AG04449 (cell line): ENCODE measurements at regions of chr20 and their contacts with region 1.

Region 1: DNA sequence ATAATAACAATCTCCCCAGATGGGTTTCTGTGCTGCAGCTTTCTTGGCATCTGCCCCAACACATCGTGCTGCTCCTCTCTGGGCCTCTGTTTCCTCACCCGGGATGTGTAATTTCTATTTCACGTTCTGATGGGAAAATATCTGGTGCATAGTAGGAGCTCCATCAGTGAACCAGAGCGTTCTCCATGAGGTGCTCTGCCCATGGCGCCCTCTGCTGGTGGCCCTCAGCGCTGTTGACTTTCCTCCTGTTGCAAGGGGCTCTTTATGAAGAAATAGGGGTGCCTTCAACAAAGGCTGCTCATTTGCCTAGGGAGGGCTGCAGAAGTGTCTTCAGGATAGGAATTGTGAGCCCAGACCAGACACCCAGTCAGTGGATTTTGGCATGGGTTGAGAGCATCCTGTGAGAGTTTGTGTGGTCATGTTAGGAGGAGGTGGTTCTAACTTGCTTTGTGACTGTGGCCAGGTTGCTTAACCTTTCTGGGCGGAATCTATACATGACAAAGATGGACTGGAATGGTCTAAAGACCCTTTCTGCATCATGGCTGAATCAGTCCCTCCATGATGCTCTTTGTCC is 8.1 kb downstream of the SCRT2 start:
- DNase-seq: no peak
- H3K4me3 ChIP-seq: no peak overlapping the region
- CTCF ChIP-seq: peak; percentile 87

Region 2: GRCh38 chr20:537139-537538 is 130.3 kb before region 1 on chr20:
- CTCF ChIA-PET with region 1: no interaction called
- POLR2A ChIA-PET with region 1: no interaction called
- DNase-seq: no peak
- H3K4me3 ChIP-seq: no peak overlapping the region
- CTCF ChIP-seq: no peak

Region 3: GRCh38 chr20:555933-556526 is 111.4 kb before region 1 on chr20:
- CTCF ChIA-PET with region 1: interaction called, 82 read pairs
- POLR2A ChIA-PET with region 1: no interaction called
- DNase-seq: no peak
- H3K4me3 ChIP-seq: no peak overlapping the region
- CTCF ChIP-seq: no peak

Region 4: GRCh38 chr20:653110-653589 is 14.3 kb before region 1 on chr20 and contains the start of gene SRXN1:
- CTCF ChIA-PET with region 1: interaction called, 47 read pairs
- POLR2A ChIA-PET with region 1: no interaction called
- DNase-seq: peak; percentile 31
- H3K4me3 ChIP-seq: peak within 1 kb of the TSS; percentile 93
- CTCF ChIP-seq: peak; percentile 74

Region 5: DNA sequence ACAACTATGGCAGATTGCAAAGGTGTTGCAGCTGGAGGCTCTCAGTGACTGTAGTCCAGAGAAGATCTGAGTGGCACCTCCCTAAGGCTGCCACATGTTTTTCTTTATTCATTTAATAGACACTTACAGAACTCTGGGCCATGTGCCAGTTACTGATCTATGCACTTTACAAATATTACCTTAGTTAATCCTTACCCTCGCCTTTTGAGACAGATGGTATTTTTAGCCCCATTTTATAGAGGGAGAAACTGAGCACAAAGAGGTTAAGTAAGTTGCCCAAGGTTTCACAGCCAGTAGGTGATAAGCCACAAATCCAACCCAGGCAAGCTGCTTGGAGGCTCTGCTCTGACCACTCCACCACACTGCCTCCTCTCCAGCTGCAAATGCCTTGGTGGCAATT is 14.6 kb after region 1 on chr20:
- CTCF ChIA-PET with region 1: interaction called, 15 read pairs
- POLR2A ChIA-PET with region 1: no interaction called
- DNase-seq: no peak
- H3K4me3 ChIP-seq: no peak overlapping the region
- CTCF ChIP-seq: no peak